Pancreas (tissue), 10 donors: ENCODE measurements at regions of chr11 and their contacts with region 1.

Region 1: DNA sequence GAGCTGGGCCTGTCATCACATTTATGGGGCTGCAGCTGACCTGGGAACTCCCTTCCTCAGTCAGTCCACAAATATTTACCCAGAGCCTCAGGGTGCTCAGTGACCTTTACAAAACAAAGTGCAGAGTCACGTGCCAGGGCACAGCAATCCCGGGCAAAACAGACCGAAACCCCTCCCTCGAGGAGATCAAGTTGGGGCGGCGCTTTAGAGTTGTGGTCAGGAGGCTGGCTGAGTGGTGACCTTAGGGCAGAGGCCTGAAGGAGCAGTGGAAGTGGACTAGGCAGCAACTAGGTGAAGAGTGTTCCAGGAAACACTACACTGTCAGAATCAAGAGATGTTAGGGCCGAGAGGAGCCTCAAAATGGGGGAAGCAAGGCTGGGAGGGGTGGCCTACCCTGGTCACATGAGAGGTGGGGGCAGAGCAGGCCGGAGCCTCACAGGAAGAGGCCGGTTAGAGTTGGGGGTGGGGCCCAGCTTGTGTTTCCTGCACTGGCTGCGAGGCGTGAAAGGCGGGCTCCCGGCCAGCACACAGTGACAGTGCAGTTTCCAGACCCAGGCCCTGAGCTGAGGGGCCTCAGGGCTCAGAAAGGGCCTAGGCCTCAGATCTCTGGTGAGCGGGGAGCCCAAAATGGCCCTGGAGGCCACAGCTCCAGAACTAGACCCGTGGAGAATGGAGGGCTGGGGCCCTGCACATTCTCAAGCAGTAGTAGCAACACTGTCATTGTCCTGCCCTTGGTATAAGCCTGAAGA is 3.7 kb upstream of the NEAT1 start:
- DNase-seq: peak; percentile 89 to 96 (median 96)
- ATAC-seq: peak; percentile 15 to 48 (median 30)
- H3K4me3 ChIP-seq: peak overlapping the region in 2 of 4 donors; percentile 81 to 93
- H3K27ac ChIP-seq: peak overlapping the region; percentile 98 to 99 (median 99)
- H3K4me1 ChIP-seq: peaks cover 36 to 51% (median 44%) of the 10 kb centered on the region in 3 donors
- H3K27me3 ChIP-seq: no peaks in the 10 kb centered on the region
- CTCF ChIP-seq: no peak

Region 2: DNA sequence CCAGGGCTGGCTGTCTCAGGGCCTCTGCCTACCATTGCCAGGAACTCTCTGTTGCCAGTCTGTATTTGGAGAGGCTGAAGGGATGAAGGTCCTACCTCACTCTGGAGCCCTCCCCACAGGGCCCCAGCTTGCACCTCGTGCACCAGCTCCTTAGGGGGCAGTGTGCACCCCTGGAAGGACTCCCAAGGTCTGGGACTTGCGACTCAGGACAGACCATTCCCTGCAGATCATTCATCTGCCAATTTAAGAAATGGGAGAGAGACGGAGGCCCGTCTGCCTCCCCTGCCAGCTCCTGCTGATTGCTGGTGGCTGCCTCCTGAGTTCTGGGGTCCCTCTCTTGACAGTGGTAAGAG is 52.5 kb after region 1 on chr11:
- intact Hi-C with region 1: loop called in 2 of 3 experiments (anchors 2 to 5 kb)
- DNase-seq: peak; percentile 76 to 87 (median 81)
- ATAC-seq: peak; percentile 73 to 85 (median 82)
- H3K4me3 ChIP-seq: peak overlapping the region in 1 of 4 donors; percentile 20
- H3K27ac ChIP-seq: peak overlapping the region; percentile 78 to 93 (median 88)
- H3K4me1 ChIP-seq: peaks cover 15 to 31% (median 24%) of the 10 kb centered on the region in 3 donors
- H3K27me3 ChIP-seq: no peaks in the 10 kb centered on the region
- CTCF ChIP-seq: peak; percentile 29 to 55 (median 46)

Region 3: DNA sequence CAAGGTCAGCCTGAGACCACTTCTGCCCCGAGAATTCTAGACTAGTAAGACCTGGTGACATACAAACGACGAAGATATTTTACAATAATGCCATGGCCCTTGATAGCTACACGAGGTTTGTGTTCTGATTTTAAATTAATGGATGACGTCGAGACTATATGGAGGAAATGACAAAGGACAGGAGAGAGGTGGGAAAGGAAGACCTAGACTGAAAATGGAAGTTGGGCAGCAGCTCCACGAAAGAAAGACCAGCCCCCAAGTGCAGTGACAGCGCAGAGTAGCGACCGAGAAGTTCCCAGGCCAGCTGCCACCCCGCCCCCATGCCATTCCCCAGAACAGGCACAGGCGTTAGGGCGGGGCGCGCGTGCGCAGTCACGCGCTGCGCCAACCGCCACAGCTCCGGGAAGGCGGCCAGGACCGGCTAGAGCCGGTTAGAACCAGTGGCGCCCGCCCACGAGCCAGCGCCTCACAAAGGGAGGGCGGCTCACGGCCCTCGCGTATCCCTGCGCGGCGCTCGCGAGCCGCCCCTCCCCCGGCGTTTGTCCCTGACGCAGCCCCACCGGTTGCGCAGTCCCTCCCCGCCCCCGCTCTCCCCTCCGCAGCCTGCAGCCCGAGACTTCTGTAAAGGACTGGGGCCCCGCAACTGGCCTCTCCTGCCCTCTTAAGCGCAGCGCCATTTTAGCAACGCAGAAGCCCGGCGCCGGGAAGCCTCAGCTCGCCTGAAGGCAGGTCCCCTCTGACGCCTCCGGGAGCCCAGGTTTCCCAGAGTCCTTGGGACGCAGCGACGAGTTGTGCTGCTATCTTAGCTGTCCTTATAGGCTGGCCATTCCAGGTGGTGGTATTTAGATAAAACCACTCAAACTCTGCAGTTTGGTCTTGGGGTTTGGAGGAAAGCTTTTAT is 78.5 kb after region 1 on chr11:
- intact Hi-C with region 1: loop called in 2 of 3 experiments (anchors 2 to 5 kb)
- DNase-seq: peak; percentile 99 to 100 (median 99)
- ATAC-seq: peak; percentile 67 to 84 (median 77)
- H3K4me3 ChIP-seq: peak overlapping the region; percentile 46 to 81 (median 72)
- H3K27ac ChIP-seq: peak overlapping the region; percentile 96 to 99 (median 98)
- H3K4me1 ChIP-seq: peaks cover 40 to 42% (median 41%) of the 10 kb centered on the region in 3 donors
- H3K27me3 ChIP-seq: no peaks in the 10 kb centered on the region
- CTCF ChIP-seq: no peak

Region 4: GRCh38 chr11:65516135-65516935 is 97.5 kb after region 1 on chr11:
- intact Hi-C with region 1: loop called in 1 of 3 experiments (anchors 5 kb)
- DNase-seq: peak in 2 of 6 donors; percentile 13 to 33
- ATAC-seq: peak in 1 of 4 donors; percentile 21
- H3K4me3 ChIP-seq: no peak overlapping the region
- H3K27ac ChIP-seq: no peak overlapping the region
- H3K4me1 ChIP-seq: no peaks in the 10 kb centered on the region
- H3K27me3 ChIP-seq: no peaks in the 10 kb centered on the region
- CTCF ChIP-seq: no peak